ENCODE measurements at regions of chr7 and their contacts with region 1.

Region 1: GRCh38 chr7:91041141-91041904 is 222.9 kb upstream of the FZD1 start:
- DNase-seq: no peak
- H3K4me3 ChIP-seq: no peak overlapping the region
- H3K27ac ChIP-seq: no peak overlapping the region
- H3K4me1 ChIP-seq: peaks cover 21% of the 10 kb centered on the region
- H3K27me3 ChIP-seq: no peaks in the 10 kb centered on the region
- CTCF ChIP-seq: no peak

Region 2: GRCh38 chr7:90655566-90655965 is 385.8 kb before region 1 on chr7:
- CTCF ChIA-PET with region 1: no interaction called
- POLR2A ChIA-PET with region 1: no interaction called
- intact Hi-C with region 1: no loop called
- DNase-seq: peak; percentile 63
- H3K4me3 ChIP-seq: no peak overlapping the region
- H3K27ac ChIP-seq: peak overlapping the region; percentile 34
- H3K4me1 ChIP-seq: peaks cover 31% of the 10 kb centered on the region
- H3K27me3 ChIP-seq: no peaks in the 10 kb centered on the region
- CTCF ChIP-seq: no peak

Region 3: GRCh38 chr7:90692396-90692795 is 348.9 kb before region 1 on chr7:
- CTCF ChIA-PET with region 1: no interaction called
- POLR2A ChIA-PET with region 1: no interaction called
- intact Hi-C with region 1: no loop called
- DNase-seq: peak; percentile 34
- H3K4me3 ChIP-seq: no peak overlapping the region
- H3K27ac ChIP-seq: no peak overlapping the region
- H3K4me1 ChIP-seq: peaks cover 30% of the 10 kb centered on the region
- H3K27me3 ChIP-seq: no peaks in the 10 kb centered on the region
- CTCF ChIP-seq: no peak

Region 4: GRCh38 chr7:91051966-91052365 is 10.6 kb after region 1 on chr7:
- CTCF ChIA-PET with region 1: no interaction called
- POLR2A ChIA-PET with region 1: interaction called, 17 read pairs
- intact Hi-C with region 1: no loop called
- DNase-seq: no peak
- H3K4me3 ChIP-seq: no peak overlapping the region
- H3K27ac ChIP-seq: no peak overlapping the region
- H3K4me1 ChIP-seq: peaks cover under 1% of the 10 kb centered on the region
- H3K27me3 ChIP-seq: no peaks in the 10 kb centered on the region
- CTCF ChIP-seq: no peak

Region 5: DNA sequence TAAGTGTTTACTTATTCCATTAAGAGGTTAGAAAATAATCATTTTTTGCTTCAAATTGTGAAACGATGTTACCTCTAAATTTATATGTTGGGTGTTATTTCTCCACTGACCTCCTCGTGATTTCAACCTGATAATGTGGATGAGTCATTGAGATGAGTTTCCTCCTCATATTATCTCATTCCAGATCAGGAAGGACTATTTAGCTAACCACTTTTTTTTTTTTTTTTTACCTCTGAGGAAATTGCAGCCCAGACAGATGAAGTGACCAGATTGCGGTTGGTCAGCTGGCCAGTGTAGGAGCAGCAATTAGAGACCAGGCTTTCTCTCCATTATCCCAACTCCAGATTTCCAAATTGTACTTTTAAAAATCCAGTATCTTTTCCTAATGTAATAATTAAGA is 471.6 kb after region 1 on chr7:
- CTCF ChIA-PET with region 1: no interaction called
- POLR2A ChIA-PET with region 1: no interaction called
- intact Hi-C with region 1: no loop called
- DNase-seq: peak; percentile 41
- H3K4me3 ChIP-seq: no peak overlapping the region
- H3K27ac ChIP-seq: no peak overlapping the region
- H3K4me1 ChIP-seq: peaks cover 18% of the 10 kb centered on the region
- H3K27me3 ChIP-seq: no peaks in the 10 kb centered on the region
- CTCF ChIP-seq: no peak

Measured in A673 (cell line).